Activated CD8-positive, alpha-beta T cell treated with anti-CD3 and anti-CD28 coated beads for 36 hours (primary cell): ENCODE measurements at regions of chr16 and their contacts with region 1.

Region 1: GRCh38 chr16:31179747-31180459 is at the start of gene FUS:
- DNase-seq: peak; percentile 92
- ATAC-seq: peak; percentile 55
- H3K4me3 Mint-ChIP-seq: peak within 1 kb of the TSS; percentile 99
- H3K27ac Mint-ChIP-seq: peak within 1 kb of the TSS; percentile 99
- H3K4me1 Mint-ChIP-seq: peaks cover 44% of the 10 kb centered on the region
- H3K27me3 Mint-ChIP-seq: no peaks in the 10 kb centered on the region
- CTCF ChIP-seq: no peak
- total RNA-seq, gene FUS: 486 to 533 TPM

Region 2: DNA sequence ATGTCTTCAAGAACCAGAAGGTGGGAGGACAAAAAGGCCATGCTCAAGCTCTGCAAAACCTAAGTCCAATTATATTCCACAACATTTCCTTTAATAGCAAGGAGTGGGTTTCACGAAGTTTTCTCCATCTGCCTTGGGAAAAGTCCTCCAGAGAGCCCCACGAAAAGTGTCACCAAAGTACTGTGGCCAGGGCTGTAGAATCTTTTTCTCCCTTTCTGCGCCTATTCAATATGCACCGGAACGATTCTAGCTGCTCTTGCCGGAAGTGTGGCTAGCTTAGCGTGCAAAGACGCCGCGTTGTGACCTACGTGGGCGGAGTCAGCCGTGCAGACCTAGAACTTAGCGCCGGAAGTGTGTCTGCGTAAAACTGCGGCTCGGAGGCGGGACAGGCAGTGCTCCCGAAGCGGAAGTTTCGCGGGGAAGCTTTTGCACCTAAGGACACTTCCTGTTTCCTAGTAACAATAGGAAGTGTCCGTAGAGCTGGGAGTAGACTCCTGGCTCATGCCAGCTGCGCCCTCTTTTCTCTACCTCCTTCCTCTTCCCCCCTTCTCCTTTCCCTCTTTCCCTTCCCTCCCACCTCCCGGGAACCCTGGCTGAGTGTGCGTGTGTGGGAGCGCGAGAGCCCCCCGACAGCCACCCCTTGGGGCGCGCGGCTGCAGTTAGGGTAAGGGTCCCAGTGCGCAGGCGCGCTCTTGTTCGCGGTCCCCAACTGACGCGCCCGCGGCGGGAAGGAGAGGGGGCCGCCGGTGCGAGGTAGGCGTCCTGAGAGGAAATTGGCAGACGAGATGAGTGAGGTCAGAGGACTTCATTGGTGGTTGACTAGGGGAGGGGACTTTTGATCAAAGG is 105.7 kb before region 1 on chr16 and contains the starts of genes ZNF646 and ZNF668:
- CTCF ChIA-PET with region 1: no interaction called
- POLR2A ChIA-PET with region 1: interaction called, 23 read pairs
- intact Hi-C with region 1: no loop called
- DNase-seq: peak; percentile 100
- ATAC-seq: peak; percentile 80
- H3K4me3 Mint-ChIP-seq: peak within 1 kb of the TSS; percentile 96
- H3K27ac Mint-ChIP-seq: peak within 1 kb of the TSS; percentile 98
- H3K4me1 Mint-ChIP-seq: peaks cover 43% of the 10 kb centered on the region
- H3K27me3 Mint-ChIP-seq: no peaks in the 10 kb centered on the region
- CTCF ChIP-seq: no peak
- total RNA-seq, gene ZNF646: 22.0 to 24.4 TPM
- total RNA-seq, gene ZNF668: 16.2 to 18.8 TPM

Region 3: DNA sequence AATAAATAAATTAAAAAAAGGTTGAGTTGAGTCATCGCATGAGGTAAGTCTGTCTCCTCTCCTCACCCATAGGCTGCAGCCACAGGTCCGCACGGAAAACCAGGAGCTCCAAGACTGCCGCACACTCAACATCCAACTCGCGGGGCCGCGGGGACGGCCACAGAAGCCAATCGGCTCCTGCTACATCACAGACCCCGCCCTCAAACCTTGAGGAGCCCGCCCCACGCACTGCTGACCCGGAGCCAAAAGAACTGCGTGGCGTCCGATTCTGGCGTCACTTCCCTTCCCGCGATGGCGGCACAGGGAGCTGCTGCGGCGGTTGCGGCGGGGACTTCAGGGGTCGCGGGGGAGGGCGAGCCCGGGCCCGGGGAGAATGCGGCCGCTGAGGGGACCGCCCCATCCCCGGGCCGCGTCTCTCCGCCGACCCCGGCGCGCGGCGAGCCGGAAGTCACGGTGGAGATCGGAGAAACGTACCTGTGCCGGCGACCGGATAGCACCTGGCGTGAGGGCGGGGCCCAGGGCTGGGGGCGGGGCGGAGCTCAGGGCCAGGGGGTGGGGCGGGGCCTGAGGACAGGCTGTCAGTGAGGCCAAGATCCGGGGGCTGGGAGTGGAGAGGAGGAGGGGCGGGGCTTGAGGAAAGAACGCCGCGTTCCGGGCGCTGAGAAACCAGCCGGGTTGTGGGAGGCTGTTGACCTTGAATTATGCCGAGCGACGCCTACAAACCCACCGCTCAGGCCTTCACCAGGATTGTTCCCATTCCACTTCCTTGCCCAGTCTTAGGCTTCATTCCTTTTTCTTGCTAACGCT is 62.3 kb before region 1 on chr16 and contains the start of gene KAT8:
- CTCF ChIA-PET with region 1: no interaction called
- POLR2A ChIA-PET with region 1: interaction called, 13 read pairs
- intact Hi-C with region 1: loop called (anchors 10 kb)
- DNase-seq: peak; percentile 99
- ATAC-seq: peak; percentile 95
- H3K4me3 Mint-ChIP-seq: peak within 1 kb of the TSS; percentile 87
- H3K27ac Mint-ChIP-seq: peak within 1 kb of the TSS; percentile 86
- H3K4me1 Mint-ChIP-seq: peaks cover 23% of the 10 kb centered on the region
- H3K27me3 Mint-ChIP-seq: no peaks in the 10 kb centered on the region
- CTCF ChIP-seq: no peak
- total RNA-seq, gene KAT8: 55.6 to 58.7 TPM

Region 4: DNA sequence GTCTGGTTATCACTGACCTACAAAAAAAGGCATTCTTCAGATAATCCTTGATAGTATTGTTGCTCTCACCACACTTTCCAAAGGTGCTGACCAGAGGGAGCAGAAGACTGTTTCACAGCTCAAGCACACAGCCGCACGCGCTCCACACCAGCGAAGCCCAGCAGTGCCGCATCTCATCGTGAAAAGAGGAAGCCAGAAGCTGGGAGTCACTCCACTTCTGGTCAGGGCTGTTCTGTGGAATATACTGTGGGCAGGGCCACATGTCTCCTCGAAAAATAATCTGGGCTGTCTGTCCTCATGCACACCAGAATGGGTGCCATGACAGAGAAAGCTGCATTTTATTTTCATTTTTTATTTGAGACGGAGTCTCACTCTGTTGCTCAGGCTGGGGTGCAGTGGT is 22.8 kb before region 1 on chr16:
- CTCF ChIA-PET with region 1: interaction called, 13 read pairs
- POLR2A ChIA-PET with region 1: interaction called, 49 read pairs
- intact Hi-C with region 1: no loop called
- DNase-seq: no peak
- ATAC-seq: no peak
- H3K4me3 Mint-ChIP-seq: peak overlapping the region; percentile 40
- H3K27ac Mint-ChIP-seq: no peak overlapping the region
- H3K4me1 Mint-ChIP-seq: peaks cover 9% of the 10 kb centered on the region
- H3K27me3 Mint-ChIP-seq: peaks cover 2% of the 10 kb centered on the region
- CTCF ChIP-seq: no peak

Region 5: DNA sequence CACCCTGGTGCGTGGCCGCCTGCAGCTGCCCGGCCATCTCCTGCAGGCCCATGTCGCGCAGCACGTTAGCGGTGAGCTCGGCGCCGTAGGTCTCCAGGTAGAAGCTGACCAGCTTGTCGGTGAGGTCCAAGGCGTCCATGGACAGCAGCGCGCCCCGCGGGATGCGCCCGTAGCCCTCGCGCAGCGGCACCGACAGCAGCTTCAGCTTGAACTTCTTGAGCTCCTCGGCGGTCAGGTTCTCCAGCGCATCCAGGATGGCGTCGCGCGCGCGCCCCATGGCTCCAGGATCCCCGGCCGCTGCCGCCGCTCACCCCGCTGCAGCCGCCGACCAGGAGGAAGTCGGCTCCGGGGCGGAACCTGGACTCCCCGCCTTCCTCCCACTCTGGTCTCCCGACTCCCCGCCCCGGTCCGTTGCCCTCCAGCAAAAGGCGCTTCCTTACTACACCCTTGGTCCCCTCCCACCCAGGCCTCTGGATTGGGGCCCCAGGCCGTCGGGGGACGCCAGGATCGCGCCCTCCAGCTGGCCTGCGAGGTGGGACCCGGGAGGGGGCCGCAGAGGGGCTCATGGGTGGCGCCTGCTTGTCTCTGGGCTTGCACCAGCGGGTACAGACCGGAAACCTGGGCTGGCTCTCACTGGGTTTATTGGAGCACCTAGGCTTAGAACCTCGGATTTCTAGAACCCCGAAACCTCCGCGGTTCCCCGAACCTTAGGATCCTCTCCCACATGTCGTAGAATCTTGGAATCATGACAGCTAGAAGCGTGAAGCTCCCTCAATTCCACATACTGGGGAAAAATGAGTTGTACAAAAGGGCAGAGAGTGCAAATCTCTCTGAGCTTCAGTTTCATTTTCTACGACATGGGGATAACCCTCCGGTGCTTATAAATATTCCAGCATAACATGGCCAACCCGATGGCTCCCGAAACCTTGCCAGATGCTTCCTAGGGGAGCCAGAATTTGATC is 22.8 kb after region 1 on chr16 and contains the start of gene PYCARD:
- CTCF ChIA-PET with region 1: no interaction called
- POLR2A ChIA-PET with region 1: interaction called, 482 read pairs
- intact Hi-C with region 1: no loop called
- DNase-seq: peak; percentile 45
- ATAC-seq: peak; percentile 24
- H3K4me3 Mint-ChIP-seq: peak within 1 kb of the TSS; percentile 75
- H3K27ac Mint-ChIP-seq: peak within 1 kb of the TSS; percentile 47
- H3K4me1 Mint-ChIP-seq: peaks cover 40% of the 10 kb centered on the region
- H3K27me3 Mint-ChIP-seq: no peaks in the 10 kb centered on the region
- CTCF ChIP-seq: no peak
- total RNA-seq, gene PYCARD: 5.9 to 6.1 TPM

Region 6: GRCh38 chr16:31229501-31229900 is 49.6 kb after region 1 on chr16:
- CTCF ChIA-PET with region 1: no interaction called
- POLR2A ChIA-PET with region 1: no interaction called
- intact Hi-C with region 1: no loop called
- DNase-seq: no peak
- ATAC-seq: no peak
- H3K4me3 Mint-ChIP-seq: no peak overlapping the region
- H3K27ac Mint-ChIP-seq: no peak overlapping the region
- H3K4me1 Mint-ChIP-seq: no peaks in the 10 kb centered on the region
- H3K27me3 Mint-ChIP-seq: no peaks in the 10 kb centered on the region
- CTCF ChIP-seq: no peak

Region 7: DNA sequence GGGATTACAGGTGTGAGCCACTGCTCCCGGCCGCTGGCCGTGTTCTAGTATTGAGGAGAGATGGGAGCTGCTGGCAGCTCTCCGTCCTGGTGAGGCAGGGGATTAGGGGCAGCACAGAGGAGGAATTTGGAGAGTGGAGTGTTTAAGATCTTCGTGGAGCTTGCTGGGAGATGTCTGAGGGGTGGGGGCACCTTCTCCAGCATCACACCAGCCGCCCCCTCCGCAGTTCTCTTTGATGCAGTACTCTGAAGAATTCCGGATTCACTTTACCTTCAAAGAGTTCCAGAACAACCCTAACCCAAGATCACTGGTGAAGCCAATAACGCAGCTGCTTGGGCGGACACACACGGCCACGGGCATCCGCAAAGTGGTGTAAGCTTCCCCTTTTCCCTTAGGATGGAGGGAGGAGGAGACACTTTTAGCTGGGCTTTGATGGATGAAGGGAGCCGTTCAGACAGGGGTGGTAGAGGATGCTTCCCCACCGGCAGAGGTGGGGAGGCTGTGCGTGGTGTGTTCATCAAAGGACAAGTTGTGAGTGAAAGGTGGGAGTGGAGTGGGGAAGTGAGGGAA is 91.8 kb after region 1 on chr16:
- CTCF ChIA-PET with region 1: no interaction called
- POLR2A ChIA-PET with region 1: no interaction called
- intact Hi-C with region 1: no loop called
- DNase-seq: no peak
- ATAC-seq: no peak
- H3K4me3 Mint-ChIP-seq: no peak overlapping the region
- H3K27ac Mint-ChIP-seq: no peak overlapping the region
- H3K4me1 Mint-ChIP-seq: peaks cover 16% of the 10 kb centered on the region
- H3K27me3 Mint-ChIP-seq: peaks cover 4% of the 10 kb centered on the region
- CTCF ChIP-seq: no peak

Region 8: DNA sequence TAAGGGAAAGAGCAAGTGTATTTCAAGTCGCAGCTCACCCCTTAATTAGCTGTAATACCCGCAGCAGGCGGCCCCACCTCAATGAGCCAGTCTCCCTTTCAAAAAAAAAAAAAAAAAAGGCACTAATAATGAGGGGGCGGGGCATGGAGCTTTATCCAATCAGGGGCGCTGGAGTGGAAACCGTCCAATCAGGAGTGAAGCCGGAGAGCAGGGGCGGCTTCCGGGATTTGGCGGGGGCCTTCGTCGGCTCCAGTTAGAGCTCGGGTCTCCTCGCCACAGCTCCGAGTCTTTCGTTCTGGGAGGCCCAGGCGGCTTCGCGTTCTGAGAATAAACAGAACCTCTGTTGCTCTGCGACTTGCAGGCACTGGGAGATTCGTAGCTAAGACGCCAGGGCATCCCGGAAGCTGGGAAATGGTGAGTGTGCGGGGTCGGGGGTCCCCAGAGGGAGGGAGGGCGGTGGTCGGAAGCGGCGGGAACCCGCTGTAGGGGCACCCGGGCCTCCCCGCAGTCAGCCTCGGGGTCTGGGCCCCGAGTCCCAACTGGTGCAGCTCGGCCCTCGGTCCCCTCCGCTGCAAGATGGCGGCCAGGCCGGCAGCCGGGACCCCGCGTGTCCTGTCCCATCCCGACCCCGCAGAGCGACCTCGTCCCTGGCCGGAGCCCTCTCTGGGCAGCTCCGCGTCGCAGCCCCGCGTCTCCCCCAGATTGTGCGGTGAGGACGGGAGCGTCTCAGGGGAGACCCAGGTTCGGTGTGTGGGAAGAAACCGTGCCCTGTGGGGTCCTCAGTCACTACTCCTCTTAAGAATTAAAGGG is 693.9 kb after region 1 on chr16 and contains the start of gene ZNF267:
- CTCF ChIA-PET with region 1: interaction called, 3 read pairs
- POLR2A ChIA-PET with region 1: interaction called, 5 read pairs
- intact Hi-C with region 1: loop called (anchors 10 kb)
- DNase-seq: peak; percentile 98
- ATAC-seq: peak; percentile 67
- H3K4me3 Mint-ChIP-seq: peak within 1 kb of the TSS; percentile 97
- H3K27ac Mint-ChIP-seq: peak within 1 kb of the TSS; percentile 96
- H3K4me1 Mint-ChIP-seq: peaks cover 73% of the 10 kb centered on the region
- H3K27me3 Mint-ChIP-seq: no peaks in the 10 kb centered on the region
- CTCF ChIP-seq: no peak
- total RNA-seq, gene ZNF267: 67.7 to 70.2 TPM